ENCODE measurements at regions of chr16 and their contacts with region 1.

Region 1: GRCh38 chr16:75801307-75801706 is 75.0 kb upstream of the CPHXL start:
- DNase-seq: peak; percentile 37
- ATAC-seq: no peak
- H3K4me3 ChIP-seq: no peak overlapping the region
- H3K27ac ChIP-seq: no peak overlapping the region
- H3K4me1 ChIP-seq: no peaks in the 10 kb centered on the region
- H3K27me3 ChIP-seq: peaks cover 18% of the 10 kb centered on the region
- CTCF ChIP-seq: peak; percentile 52

Region 2: GRCh38 chr16:75742424-75743047 is 58.8 kb before region 1 on chr16:
- CTCF ChIA-PET with region 1: no interaction called
- POLR2A ChIA-PET with region 1: no interaction called
- intact Hi-C with region 1: no loop called
- DNase-seq: no peak
- ATAC-seq: no peak
- H3K4me3 ChIP-seq: no peak overlapping the region
- H3K27ac ChIP-seq: no peak overlapping the region
- H3K4me1 ChIP-seq: peaks cover 8% of the 10 kb centered on the region; the same call in 1 of the 2 replicates
- H3K27me3 ChIP-seq: no peaks in the 10 kb centered on the region
- CTCF ChIP-seq: no peak

Region 3: DNA sequence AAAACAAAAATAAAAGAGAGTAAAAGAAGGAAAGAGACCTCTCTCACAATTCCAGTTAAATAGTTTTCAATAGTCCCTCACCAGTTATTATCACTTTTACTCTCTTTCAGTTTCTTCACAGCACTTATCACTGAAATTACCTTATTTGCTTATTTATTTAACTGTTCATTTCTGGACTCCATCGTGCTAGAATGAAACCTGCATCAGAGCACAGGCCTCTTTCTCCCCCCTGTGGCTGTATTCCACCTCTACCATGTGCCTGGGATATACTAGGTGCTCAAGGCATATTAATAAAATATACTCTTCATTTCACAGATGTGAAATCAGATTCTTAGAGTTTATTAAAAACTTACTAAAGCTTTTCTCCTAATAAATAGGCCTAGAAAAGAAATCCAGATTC is 1080.8 kb after region 1 on chr16:
- CTCF ChIA-PET with region 1: no interaction called
- POLR2A ChIA-PET with region 1: no interaction called
- intact Hi-C with region 1: loop called (anchors 10 kb)
- DNase-seq: peak; percentile 31
- ATAC-seq: peak; percentile 76
- H3K4me3 ChIP-seq: no peak overlapping the region
- H3K27ac ChIP-seq: no peak overlapping the region
- H3K4me1 ChIP-seq: no peaks in the 10 kb centered on the region
- H3K27me3 ChIP-seq: peaks cover 30% of the 10 kb centered on the region
- CTCF ChIP-seq: peak; percentile 60